ENCODE measurements at regions of chr16 and their contacts with region 1.

Region 1: DNA sequence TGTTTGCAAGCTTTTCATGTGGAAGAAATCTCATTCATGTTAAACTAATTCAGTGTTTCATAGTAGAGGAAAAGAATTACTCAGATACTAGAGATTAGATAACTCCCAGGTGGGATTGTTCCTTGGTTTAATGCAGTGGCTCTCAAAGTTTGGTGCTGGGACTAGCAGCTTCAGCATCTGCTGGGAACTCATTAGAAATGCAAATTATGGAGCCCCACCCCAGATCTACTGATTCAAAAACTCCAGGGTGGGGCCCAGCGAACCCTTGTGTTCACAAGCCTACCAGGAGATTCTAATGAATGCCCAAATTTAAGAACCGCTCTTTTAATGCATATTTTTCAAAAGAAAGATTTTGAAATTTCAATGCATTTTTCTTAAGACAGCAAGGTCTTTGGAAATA is 253.4 kb upstream of the CNTNAP4 start:
- DNase-seq: no peak
- ATAC-seq: no peak
- H3K4me3 ChIP-seq: no peak overlapping the region
- H3K27ac ChIP-seq: no peak overlapping the region
- H3K4me1 ChIP-seq: no peaks in the 10 kb centered on the region
- H3K27me3 ChIP-seq: no peaks in the 10 kb centered on the region
- CTCF ChIP-seq: no peak
- EP300 ChIP-seq: no peak
- POLR2A ChIP-seq: no peak
- RAD21 ChIP-seq: no peak

Region 2: GRCh38 chr16:76035689-76036088 is 11.9 kb after region 1 on chr16:
- CTCF ChIA-PET with region 1: no interaction called
- POLR2A ChIA-PET with region 1: no interaction called
- in situ Hi-C with region 1: no loop called
- intact Hi-C with region 1: no loop called
- DNase-seq: no peak
- ATAC-seq: no peak
- H3K4me3 ChIP-seq: no peak overlapping the region
- H3K27ac ChIP-seq: no peak overlapping the region
- H3K4me1 ChIP-seq: no peaks in the 10 kb centered on the region
- H3K27me3 ChIP-seq: no peaks in the 10 kb centered on the region
- CTCF ChIP-seq: no peak
- EP300 ChIP-seq: no peak
- POLR2A ChIP-seq: no peak
- RAD21 ChIP-seq: no peak

Region 3: DNA sequence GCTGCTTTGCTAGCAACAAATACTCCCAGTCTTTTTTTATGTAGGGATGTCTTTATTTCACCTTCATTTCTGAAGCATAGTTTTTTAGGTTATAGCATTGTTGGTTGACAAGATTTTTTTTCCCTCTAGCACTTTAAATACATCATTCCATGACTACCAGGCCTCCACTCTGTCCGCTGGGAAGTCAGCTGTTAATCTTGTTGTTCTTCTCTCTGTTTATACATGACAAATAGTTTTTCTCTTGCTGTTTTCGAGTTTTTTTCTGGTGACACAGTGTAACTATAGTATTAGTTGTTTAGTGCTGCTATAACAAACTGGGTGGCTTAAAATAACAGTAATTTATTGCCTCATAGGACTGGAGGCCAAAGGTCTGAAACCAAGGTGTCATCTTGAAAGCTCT is 47.9 kb after region 1 on chr16:
- CTCF ChIA-PET with region 1: no interaction called
- POLR2A ChIA-PET with region 1: no interaction called
- in situ Hi-C with region 1: no loop called
- intact Hi-C with region 1: loop called (anchors 2 kb)
- DNase-seq: no peak
- ATAC-seq: no peak
- H3K4me3 ChIP-seq: no peak overlapping the region
- H3K27ac ChIP-seq: no peak overlapping the region
- H3K4me1 ChIP-seq: no peaks in the 10 kb centered on the region
- H3K27me3 ChIP-seq: no peaks in the 10 kb centered on the region
- CTCF ChIP-seq: no peak
- EP300 ChIP-seq: no peak
- POLR2A ChIP-seq: no peak
- RAD21 ChIP-seq: no peak

Measured in HepG2 (cell line).